Activated CD8-positive, alpha-beta T cell treated with anti-CD3 and anti-CD28 coated beads, Interleukin-2, amount 10 ng/mL, durations not matched to agents 7 days and 5 days (primary cell): ENCODE measurements at regions of chr13 and their contacts with region 1.

Region 1: GRCh38 chr13:40974460-40975407 is 44.4 kb downstream of the ELF1 start:
- DNase-seq: peak; percentile 64
- ATAC-seq: peak; percentile 82
- H3K4me3 Mint-ChIP-seq: no peak overlapping the region
- H3K27ac Mint-ChIP-seq: peak overlapping the region; percentile 23
- H3K4me1 Mint-ChIP-seq: peaks cover 85% of the 10 kb centered on the region
- H3K27me3 Mint-ChIP-seq: no peaks in the 10 kb centered on the region

Region 2: DNA sequence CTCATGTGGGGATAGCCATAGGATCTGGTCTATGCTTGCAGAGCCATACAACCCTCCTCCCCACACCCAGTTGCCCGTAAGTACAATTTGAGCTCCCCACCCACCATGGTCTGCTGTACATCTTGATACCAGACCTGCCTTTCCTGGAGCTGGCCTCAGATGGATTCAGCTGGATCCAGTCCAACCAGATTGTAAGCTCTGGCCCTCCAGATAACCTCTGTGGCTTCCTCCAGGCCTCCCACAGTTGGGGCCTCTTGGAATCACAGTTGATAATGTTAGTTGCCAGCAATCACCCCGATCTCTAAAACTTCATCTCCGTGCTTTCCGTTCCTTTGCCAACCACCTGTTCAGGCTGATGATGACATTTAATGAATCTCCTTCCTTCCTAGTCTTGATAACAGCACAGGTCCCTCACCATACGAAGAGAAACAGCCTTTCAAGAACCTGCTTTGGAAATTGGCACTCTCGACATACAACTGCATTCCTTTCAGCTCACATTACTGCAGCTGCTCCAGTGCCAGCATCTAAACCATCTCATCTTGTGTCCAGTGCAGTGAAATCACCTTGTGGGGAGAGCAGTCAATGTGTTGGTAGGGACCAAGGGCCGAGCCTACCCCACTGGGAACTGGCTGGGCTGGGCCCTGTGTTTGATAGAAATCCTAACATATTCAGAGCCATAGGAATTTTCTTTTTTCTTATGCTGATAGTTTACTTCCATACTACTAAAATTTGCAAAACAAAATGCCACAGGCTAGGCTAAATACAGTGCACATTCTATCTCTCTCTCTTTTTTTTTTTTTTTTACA is 293.2 kb before region 1 on chr13:
- CTCF ChIA-PET with region 1: no interaction called
- POLR2A ChIA-PET with region 1: no interaction called
- DNase-seq: no peak
- ATAC-seq: no peak
- H3K4me3 Mint-ChIP-seq: no peak overlapping the region
- H3K27ac Mint-ChIP-seq: no peak overlapping the region
- H3K4me1 Mint-ChIP-seq: peaks cover 7% of the 10 kb centered on the region
- H3K27me3 Mint-ChIP-seq: no peaks in the 10 kb centered on the region

Region 3: DNA sequence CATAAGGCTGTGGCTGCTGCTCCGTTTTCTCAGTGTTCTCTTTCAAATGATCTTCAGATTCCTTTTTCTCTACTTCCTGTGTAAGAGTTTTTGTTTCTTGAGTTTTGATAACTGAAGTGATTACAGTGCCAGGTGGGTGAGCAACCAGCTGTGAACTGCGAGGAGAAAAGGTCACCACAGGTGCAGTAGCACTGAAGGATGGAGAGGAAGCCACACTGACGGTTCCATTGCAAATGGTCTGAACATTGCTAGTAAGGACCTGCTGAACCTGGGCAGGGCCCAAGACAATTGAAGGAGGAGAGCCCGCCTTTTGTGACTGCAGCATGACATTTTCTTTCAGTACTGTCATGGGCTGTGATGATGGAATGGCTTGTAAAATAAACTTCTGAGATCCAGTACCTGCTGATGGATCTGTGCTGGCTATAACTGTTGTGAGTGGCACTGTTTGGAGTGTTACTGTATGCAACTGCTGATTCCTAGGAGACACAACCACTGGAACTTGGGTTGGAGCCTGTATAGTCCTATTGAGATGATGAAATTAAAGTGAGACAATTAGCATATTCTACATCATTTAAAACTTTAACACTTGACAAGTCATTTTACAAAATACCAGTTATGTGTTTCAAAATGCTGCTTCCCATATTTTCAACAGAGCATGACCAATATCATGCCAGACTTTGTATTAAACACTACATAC is 41.1 kb before region 1 on chr13:
- CTCF ChIA-PET with region 1: interaction called, 12 read pairs
- POLR2A ChIA-PET with region 1: interaction called, 3 read pairs
- DNase-seq: no peak
- ATAC-seq: peak; percentile 34
- H3K4me3 Mint-ChIP-seq: no peak overlapping the region
- H3K27ac Mint-ChIP-seq: peak overlapping the region; percentile 48
- H3K4me1 Mint-ChIP-seq: peaks cover 13% of the 10 kb centered on the region
- H3K27me3 Mint-ChIP-seq: no peaks in the 10 kb centered on the region

Region 4: GRCh38 chr13:40961214-40961613 is 13.5 kb before region 1 on chr13:
- CTCF ChIA-PET with region 1: interaction called, 14 read pairs
- POLR2A ChIA-PET with region 1: interaction called, 4 read pairs
- DNase-seq: no peak
- ATAC-seq: peak; percentile 29
- H3K4me3 Mint-ChIP-seq: no peak overlapping the region
- H3K27ac Mint-ChIP-seq: peak overlapping the region; percentile 71
- H3K4me1 Mint-ChIP-seq: peaks cover 58% of the 10 kb centered on the region
- H3K27me3 Mint-ChIP-seq: no peaks in the 10 kb centered on the region

Region 5: DNA sequence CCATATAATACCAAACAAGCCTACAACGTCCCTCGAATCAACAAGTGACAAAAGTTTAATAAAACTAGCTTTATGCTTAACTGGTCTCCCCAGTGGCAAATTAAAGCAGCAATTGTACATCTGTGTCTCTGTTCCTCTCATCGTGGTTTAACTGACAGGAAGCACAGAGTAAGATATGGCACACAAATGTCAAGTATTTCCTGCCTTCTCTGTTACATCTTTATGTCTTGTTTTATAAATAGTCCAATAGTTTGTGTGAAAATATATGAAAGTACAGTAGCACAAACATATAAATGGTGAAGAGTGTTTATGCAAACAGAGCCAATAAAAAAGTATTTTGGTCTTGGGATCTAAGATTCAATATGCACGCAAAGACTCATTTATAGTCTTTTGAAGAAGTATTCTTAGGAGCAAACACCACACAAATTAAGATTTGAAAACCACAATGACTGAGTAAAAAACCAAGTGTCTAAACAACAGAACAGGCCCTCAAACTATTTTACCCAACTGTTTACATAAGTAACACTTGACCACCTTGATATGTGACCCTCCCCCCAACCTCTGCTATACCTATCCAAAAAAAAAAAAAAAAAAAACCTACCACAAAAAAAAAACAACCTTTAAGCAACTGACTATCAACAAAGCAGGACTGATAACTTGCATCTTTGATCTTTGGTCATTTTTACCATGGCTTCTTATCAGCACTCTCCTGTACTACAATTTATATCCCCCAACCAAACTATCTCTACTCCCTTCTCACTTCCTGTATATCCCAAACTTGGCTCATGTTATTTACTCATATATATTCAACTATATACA is 30.4 kb after region 1 on chr13:
- CTCF ChIA-PET with region 1: interaction called, 21 read pairs
- POLR2A ChIA-PET with region 1: interaction called, 6 read pairs
- DNase-seq: peak; percentile 61
- ATAC-seq: peak; percentile 85
- H3K4me3 Mint-ChIP-seq: peak overlapping the region; percentile 54
- H3K27ac Mint-ChIP-seq: peak overlapping the region; percentile 87
- H3K4me1 Mint-ChIP-seq: peaks cover 68% of the 10 kb centered on the region
- H3K27me3 Mint-ChIP-seq: no peaks in the 10 kb centered on the region

Region 6: GRCh38 chr13:41019011-41019487 is 44.3 kb after region 1 on chr13 and contains the start of gene ELF1:
- CTCF ChIA-PET with region 1: interaction called, 37 read pairs
- POLR2A ChIA-PET with region 1: interaction called, 40 read pairs
- DNase-seq: peak; percentile 78
- ATAC-seq: peak; percentile 91
- H3K4me3 Mint-ChIP-seq: peak within 1 kb of the TSS; percentile 89
- H3K27ac Mint-ChIP-seq: peak within 1 kb of the TSS; percentile 99
- H3K4me1 Mint-ChIP-seq: peaks cover 42% of the 10 kb centered on the region
- H3K27me3 Mint-ChIP-seq: no peaks in the 10 kb centered on the region
- total RNA-seq, gene ELF1: 106 to 107 TPM

Region 7: DNA sequence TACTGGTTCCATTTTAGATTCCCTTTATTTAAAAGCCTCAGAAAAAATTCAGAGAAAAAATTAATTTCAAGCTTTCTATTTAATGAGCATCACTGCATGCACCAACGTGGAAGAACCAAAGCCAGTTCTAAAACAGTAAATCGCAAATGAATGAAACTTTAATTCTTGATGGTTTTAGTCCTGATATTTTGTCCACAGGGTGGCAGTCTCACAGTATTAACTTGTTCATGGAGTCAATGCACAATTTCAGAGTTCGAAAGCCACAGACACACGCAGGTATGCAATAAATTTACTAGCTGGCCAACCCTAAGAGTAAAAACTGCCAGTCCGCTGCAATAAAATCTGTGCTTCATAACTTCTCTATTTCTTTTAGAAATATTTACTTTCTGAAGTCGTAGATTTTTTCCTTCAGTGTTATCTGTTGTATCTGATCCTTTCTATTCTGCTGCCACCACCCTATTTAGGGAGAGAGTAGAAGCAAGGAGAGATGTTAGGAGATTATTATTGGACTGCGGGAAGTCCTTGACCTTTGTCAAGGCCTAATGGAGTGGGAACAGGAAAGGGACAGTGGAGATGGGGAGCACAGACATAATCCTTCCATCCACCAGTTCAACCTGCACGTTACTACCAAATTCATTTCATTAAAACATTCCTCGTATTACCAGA is 79.6 kb after region 1 on chr13:
- CTCF ChIA-PET with region 1: interaction called, 60 read pairs
- POLR2A ChIA-PET with region 1: interaction called, 5 read pairs
- DNase-seq: peak; percentile 73
- ATAC-seq: peak; percentile 72
- H3K4me3 Mint-ChIP-seq: peak overlapping the region; percentile 6
- H3K27ac Mint-ChIP-seq: no peak overlapping the region
- H3K4me1 Mint-ChIP-seq: peaks cover 56% of the 10 kb centered on the region
- H3K27me3 Mint-ChIP-seq: no peaks in the 10 kb centered on the region